ENCODE measurements at regions of chr19 and their contacts with region 1.

Region 1: DNA sequence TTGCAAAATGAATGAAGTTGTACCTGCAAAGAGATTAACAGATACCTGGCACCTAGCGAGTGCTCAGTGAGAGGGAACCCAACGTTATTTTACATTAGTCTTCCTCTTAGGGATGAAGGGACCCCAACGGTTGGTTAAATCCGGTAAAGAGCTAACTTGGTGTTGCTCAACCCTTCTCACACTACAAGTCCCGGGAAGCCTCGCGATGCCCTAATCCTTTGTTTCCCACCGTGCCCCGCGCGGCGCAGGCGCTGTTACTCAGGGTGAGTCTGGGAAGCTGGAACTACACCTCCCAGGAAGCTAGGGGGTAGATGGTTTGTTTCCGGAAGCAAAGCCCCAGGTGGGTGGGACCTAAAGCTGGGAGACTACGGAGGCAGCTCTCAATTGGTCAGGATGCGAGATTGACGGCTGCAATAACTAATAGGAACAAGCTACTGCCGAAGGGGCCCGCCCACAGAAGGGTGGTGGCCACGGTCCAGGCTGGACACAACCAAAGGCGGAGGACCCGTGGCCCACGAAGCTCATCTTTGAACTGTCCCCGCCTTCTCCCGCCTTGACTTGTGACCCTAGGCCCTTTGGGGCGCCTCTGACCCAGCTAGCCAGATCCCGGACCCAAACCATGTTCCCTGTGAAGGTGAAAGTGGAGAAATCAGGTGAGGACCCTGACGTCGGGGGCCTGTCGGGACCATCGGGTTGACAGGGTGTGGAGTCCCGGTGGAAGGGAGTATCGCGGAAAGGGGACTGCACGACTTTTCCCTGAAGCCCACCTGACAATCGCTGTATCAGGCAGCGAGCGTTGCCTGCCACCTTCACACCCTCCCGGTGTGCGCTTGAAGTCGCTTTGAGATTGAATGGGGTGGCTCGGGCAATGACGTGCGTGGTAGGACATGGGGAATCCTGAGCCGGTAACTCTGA is at the start of gene LIN37:
- H3K4me3 ChIP-seq: peak within 1 kb of the TSS; percentile 63
- H3K27ac ChIP-seq: peak within 1 kb of the TSS; percentile 68
- H3K4me1 ChIP-seq: peaks cover 30% of the 10 kb centered on the region
- CTCF ChIP-seq: no peak

Region 2: DNA sequence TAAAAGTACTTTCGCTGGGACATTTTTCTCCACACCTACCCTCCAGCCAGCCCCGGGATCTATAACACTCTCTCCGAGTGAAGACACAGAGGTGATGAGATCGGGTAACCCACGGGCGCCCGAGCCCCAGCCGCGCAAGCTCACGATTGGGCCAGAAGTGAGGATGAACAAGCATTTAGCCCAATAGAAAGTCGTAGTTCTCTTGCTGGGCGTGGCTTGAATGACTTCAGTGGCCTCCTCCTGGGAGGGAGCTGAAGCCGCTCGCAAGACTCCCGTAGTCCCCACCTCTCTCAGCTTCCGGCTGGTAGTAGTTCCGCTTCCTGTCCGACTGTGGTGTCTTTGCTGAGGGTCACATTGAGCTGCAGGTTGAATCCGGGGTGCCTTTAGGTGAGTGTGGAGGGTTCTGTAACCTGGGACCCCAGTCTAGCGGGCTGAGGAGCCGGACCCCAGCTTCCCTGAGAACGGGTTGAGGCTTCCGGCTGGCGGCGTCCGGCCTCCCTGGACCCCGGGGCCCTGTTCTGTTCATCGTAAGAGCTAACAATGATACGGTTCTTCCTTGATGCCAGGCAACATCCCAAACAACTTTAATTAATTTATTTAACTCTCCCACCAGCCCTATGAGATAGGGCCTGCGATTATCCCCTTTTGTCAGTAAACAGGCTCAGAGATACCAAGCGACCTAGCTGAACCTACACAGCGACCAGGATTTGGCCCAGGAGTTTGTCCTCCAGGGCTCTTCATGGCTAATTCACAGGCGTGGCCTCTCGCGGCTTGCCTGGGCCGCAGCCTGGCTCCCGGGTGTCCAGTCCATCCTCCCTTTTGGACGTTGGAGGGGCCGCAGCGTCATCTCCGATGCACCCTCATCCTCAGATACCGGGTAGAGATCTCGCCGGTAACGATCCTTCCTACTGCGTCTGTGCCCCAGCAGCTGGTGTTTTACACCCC is 100.1 kb before region 1 on chr19 and contains the start of gene COX6B1:
- CTCF ChIA-PET with region 1: interaction called, 3 read pairs
- POLR2A ChIA-PET with region 1: interaction called, 26 read pairs
- H3K4me3 ChIP-seq: peak within 1 kb of the TSS; percentile 70
- H3K27ac ChIP-seq: peak within 1 kb of the TSS; percentile 63
- H3K4me1 ChIP-seq: peaks cover 25% of the 10 kb centered on the region
- CTCF ChIP-seq: no peak; the same call in 1 of the 2 replicates

Region 3: GRCh38 chr19:35716801-35717666 is 31.3 kb before region 1 on chr19:
- CTCF ChIA-PET with region 1: interaction called, 5 read pairs
- POLR2A ChIA-PET with region 1: interaction called, 16 read pairs
- H3K4me3 ChIP-seq: peak overlapping the region; percentile 44
- H3K27ac ChIP-seq: peak overlapping the region; percentile 93
- H3K4me1 ChIP-seq: peaks cover 23% of the 10 kb centered on the region
- CTCF ChIP-seq: peak; percentile 100

Region 4: DNA sequence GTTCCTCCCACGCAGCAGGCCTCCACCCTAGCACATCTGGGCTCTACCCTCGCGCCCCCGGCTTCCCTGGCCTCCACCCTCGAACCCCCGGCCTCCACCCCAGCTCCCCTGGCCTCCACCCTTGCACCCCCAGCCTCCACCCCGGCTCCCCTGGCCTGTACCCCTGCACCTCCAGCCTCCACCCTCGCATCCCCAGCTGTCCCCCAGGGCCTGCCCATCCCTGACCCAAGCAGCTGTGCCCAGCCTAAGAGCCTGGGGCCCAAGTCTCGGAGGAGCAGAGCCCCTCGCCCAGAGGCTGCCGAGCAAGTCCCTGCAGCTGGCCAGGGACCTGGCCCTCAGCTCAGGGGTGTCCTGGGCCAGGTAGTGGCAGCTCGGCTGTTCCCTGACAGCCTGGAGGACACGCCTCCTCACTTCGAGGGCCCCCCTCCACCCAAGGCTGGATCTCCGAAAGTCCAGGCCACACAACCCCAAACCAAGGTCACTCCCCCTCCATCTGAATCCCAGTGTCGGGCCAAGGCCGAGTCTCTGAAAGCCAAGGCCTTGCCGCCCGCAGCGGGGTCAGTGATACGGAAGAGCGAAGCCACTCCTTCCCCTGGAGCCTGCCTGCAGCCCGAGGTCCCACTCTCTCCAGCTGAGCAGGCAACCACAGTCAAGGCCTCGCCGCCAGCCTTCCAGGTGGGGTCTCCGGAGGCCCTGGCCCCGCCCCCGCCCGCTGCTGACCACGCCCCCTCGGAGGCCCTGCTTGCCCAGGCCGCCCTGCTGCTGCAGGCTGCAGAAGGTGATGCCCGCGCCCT is 19.1 kb after region 1 on chr19:
- CTCF ChIA-PET with region 1: interaction called, 7 read pairs
- POLR2A ChIA-PET with region 1: interaction called, 29 read pairs
- H3K4me3 ChIP-seq: no peak overlapping the region
- H3K27ac ChIP-seq: 0 out of 2 replicates have a peak overlapping the region, but pooled peaks have one; percentile 37
- H3K4me1 ChIP-seq: peaks cover 7% of the 10 kb centered on the region; the same call in 1 of the 2 replicates
- CTCF ChIP-seq: no peak

Region 5: DNA sequence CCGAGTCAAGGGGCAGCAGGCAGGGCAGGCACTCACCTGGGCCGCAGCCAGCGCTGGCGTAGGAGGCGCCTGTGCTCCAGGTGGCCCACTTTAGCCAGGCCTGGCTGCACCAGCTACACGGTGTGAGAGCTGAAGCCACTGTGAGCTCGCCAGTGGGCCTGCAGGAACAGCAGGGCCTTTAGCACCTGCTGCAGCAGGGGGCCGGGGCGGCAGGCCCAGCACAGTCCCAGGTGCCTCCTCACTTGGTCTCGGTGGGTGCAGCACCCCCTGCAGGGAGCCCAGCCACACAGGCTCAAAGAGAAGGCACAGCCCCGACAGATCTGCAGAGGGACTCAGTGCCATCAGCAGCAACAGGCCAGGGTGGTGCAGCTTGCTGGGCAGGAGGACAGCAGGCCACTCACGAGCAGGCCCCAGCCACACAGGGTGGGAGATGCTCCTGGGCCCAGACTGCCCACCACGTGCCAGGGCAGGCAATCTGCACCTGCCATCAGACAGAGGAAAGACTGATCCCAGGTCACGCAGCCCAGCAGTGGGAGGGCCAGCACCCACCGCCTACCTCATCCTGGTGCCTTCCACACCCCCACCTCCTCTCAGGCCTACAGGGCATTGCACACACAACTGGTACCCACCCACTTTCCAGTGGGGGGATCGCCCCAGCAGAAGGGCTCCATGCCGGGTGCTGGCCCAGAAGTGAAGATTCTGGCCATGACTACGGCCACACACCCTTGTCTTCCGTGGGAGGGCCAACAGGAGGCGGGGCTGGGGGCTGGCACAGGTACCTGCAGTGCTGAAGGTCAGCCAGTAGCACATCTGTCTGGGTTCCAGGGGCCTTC is 42.8 kb after region 1 on chr19:
- CTCF ChIA-PET with region 1: no interaction called
- POLR2A ChIA-PET with region 1: no interaction called
- H3K4me3 ChIP-seq: no peak overlapping the region
- H3K27ac ChIP-seq: peak overlapping the region; percentile 31
- H3K4me1 ChIP-seq: no peaks in the 10 kb centered on the region
- CTCF ChIP-seq: peak; percentile 83

Region 6: GRCh38 chr19:35869327-35870123 is 121.2 kb after region 1 on chr19:
- CTCF ChIA-PET with region 1: no interaction called
- POLR2A ChIA-PET with region 1: interaction called, 10 read pairs
- H3K4me3 ChIP-seq: peak overlapping the region; percentile 16; the same call in 1 of the 2 replicates
- H3K27ac ChIP-seq: peak overlapping the region; percentile 34; the same call in 1 of the 2 replicates
- H3K4me1 ChIP-seq: peaks cover 16% of the 10 kb centered on the region
- CTCF ChIP-seq: 0 out of 2 replicates have a peak, but pooled peaks have one; percentile 52